ENCODE measurements at regions of chr2 and their contacts with region 1.

Region 1: GRCh38 chr2:222939208-222939856 is 78.5 kb downstream of the ACSL3 start:
- DNase-seq: peak; percentile 80
- ATAC-seq: peak; percentile 94
- H3K4me3 Mint-ChIP-seq: no peak overlapping the region
- H3K27ac Mint-ChIP-seq: no peak overlapping the region
- H3K4me1 Mint-ChIP-seq: peaks cover 18% of the 10 kb centered on the region
- H3K27me3 Mint-ChIP-seq: no peaks in the 10 kb centered on the region
- CTCF ChIP-seq: peak; percentile 86

Region 2: GRCh38 chr2:222912117-222912516 is 27.2 kb before region 1 on chr2:
- CTCF ChIA-PET with region 1: interaction called, 10 read pairs
- POLR2A ChIA-PET with region 1: no interaction called
- intact Hi-C with region 1: no loop called
- DNase-seq: peak; percentile 37
- ATAC-seq: peak; percentile 84
- H3K4me3 Mint-ChIP-seq: no peak overlapping the region
- H3K27ac Mint-ChIP-seq: peak overlapping the region; percentile 56
- H3K4me1 Mint-ChIP-seq: peaks cover 36% of the 10 kb centered on the region
- H3K27me3 Mint-ChIP-seq: no peaks in the 10 kb centered on the region
- CTCF ChIP-seq: no peak

Region 3: DNA sequence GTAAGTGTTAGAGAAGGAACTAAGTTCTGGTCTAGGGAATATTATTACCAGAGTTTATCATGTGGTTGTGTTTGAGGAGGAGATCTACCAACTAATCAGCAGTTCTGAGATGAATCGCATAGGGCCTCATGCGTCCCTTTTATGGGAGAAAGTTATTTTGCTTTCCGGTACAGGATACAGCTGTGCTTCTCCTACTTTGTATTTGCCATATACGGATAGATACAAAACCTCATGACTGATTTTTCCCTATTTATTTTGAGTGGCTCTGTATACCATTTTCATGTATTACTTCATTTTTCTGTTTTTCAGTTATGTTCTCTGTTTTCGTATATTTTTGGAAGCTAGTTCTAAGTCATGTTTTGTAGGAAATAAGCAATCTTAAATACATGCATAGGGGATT is 11.7 kb before region 1 on chr2:
- CTCF ChIA-PET with region 1: interaction called, 11 read pairs
- POLR2A ChIA-PET with region 1: no interaction called
- intact Hi-C with region 1: no loop called
- DNase-seq: no peak
- ATAC-seq: no peak
- H3K4me3 Mint-ChIP-seq: no peak overlapping the region
- H3K27ac Mint-ChIP-seq: no peak overlapping the region
- H3K4me1 Mint-ChIP-seq: no peaks in the 10 kb centered on the region
- H3K27me3 Mint-ChIP-seq: no peaks in the 10 kb centered on the region
- CTCF ChIP-seq: no peak

Region 4: DNA sequence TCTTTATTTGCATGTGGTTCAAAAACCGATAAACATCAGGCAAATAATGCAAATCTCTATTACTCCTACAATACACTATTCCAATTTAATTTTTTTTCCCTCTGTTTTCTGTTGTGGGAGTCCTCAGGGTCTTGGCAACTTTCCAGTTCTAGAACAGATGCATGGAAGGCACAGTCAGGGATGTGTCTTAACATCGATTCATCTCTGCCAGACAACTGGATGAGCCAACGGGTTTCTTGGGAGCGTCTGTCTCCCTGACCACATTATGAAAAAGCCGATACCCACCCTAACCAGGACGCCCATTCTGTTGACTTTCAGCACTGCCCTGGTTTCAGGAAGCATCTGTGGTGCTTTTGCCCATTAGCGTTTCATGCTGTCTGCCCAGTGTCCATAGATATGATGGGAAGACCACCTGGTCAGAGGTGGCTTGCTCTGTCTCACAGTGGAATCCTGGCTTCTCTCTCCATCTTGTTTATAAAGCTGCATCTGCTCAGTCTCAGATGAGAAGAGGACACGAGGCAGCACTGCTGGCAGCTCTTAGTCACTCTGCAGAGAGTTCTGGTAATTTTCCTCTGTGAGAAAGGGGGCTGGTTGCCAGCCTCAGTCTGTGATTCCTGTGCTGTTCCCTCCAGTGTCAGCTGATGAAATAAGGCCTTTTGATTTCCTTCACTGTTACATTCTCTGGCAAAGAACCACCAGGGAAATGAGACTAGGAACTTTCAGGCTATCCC is 54.8 kb after region 1 on chr2:
- CTCF ChIA-PET with region 1: no interaction called
- POLR2A ChIA-PET with region 1: no interaction called
- intact Hi-C with region 1: no loop called
- DNase-seq: no peak
- ATAC-seq: no peak
- H3K4me3 Mint-ChIP-seq: no peak overlapping the region
- H3K27ac Mint-ChIP-seq: no peak overlapping the region
- H3K4me1 Mint-ChIP-seq: no peaks in the 10 kb centered on the region
- H3K27me3 Mint-ChIP-seq: peaks cover 7% of the 10 kb centered on the region
- CTCF ChIP-seq: no peak